ENCODE measurements at regions of chr4 and their contacts with region 1.

Region 1: GRCh38 chr4:14856076-14856933 is 146.0 kb upstream of the CPEB2 start:
- DNase-seq: peak; percentile 61
- H3K4me3 Mint-ChIP-seq: no peak overlapping the region
- H3K27ac Mint-ChIP-seq: peak overlapping the region; percentile 80
- H3K4me1 Mint-ChIP-seq: peaks cover 52% of the 10 kb centered on the region
- H3K27me3 Mint-ChIP-seq: no peaks in the 10 kb centered on the region

Region 2: DNA sequence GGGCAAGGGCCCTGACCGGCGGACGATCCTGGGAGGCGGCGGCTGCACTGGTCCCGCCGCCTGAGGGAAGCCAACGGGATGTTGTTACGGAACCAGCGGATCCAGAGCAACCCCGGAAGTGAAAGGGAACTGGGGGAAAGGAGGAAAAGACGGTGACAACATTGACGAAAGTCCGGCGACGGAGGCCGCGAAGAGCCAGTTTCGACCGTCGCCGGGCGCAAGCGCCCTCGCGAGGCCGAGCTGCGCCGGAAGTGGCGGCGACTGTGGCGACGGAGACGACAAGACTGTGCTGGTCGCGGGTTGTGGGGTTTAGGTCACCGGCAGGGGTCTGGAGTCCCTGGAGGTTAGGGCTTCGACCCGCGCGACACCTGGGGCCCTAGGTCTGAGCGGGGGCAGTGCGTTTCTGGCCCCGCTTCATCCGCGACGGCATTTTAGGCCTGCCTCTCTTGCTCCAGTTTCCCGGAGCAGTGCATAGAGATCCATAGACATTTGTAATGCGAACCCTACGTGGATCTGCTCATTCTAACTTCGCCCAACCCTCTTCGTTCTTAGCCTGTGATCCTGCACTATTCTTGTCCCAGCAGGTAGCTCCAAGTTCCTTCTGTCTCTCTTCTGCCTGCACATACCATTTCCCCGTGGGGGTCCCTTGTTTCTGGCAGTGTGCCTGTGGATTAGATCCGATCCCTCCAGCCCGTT is 1228.6 kb before region 1 on chr4 and contains the start of gene BOD1L1:
- intact Hi-C with region 1: loop called (anchors 2 kb)
- DNase-seq: peak; percentile 81
- H3K4me3 Mint-ChIP-seq: peak within 1 kb of the TSS; percentile 99
- H3K27ac Mint-ChIP-seq: peak within 1 kb of the TSS; percentile 98
- H3K4me1 Mint-ChIP-seq: peaks cover 29% of the 10 kb centered on the region
- H3K27me3 Mint-ChIP-seq: peaks cover 4% of the 10 kb centered on the region
- total RNA-seq, gene BOD1L1: 40.1 and 40.4 TPM in 2 replicates

Region 3: GRCh38 chr4:14787894-14788293 is 68.4 kb before region 1 on chr4:
- intact Hi-C with region 1: loop called (anchors 1 kb)
- DNase-seq: no peak
- H3K4me3 Mint-ChIP-seq: no peak overlapping the region
- H3K27ac Mint-ChIP-seq: no peak overlapping the region
- H3K4me1 Mint-ChIP-seq: peaks cover 49% of the 10 kb centered on the region
- H3K27me3 Mint-ChIP-seq: no peaks in the 10 kb centered on the region

Region 4: GRCh38 chr4:14831406-14831805 is 24.9 kb before region 1 on chr4:
- intact Hi-C with region 1: no loop called
- DNase-seq: no peak
- H3K4me3 Mint-ChIP-seq: no peak overlapping the region
- H3K27ac Mint-ChIP-seq: no peak overlapping the region
- H3K4me1 Mint-ChIP-seq: no peaks in the 10 kb centered on the region
- H3K27me3 Mint-ChIP-seq: no peaks in the 10 kb centered on the region

Region 5: GRCh38 chr4:14877246-14878225 is 21.2 kb after region 1 on chr4:
- intact Hi-C with region 1: loop called (anchors 1 kb)
- DNase-seq: no peak
- H3K4me3 Mint-ChIP-seq: peak overlapping the region; percentile 27
- H3K27ac Mint-ChIP-seq: peak overlapping the region; percentile 64
- H3K4me1 Mint-ChIP-seq: peaks cover 29% of the 10 kb centered on the region
- H3K27me3 Mint-ChIP-seq: no peaks in the 10 kb centered on the region

Region 6: DNA sequence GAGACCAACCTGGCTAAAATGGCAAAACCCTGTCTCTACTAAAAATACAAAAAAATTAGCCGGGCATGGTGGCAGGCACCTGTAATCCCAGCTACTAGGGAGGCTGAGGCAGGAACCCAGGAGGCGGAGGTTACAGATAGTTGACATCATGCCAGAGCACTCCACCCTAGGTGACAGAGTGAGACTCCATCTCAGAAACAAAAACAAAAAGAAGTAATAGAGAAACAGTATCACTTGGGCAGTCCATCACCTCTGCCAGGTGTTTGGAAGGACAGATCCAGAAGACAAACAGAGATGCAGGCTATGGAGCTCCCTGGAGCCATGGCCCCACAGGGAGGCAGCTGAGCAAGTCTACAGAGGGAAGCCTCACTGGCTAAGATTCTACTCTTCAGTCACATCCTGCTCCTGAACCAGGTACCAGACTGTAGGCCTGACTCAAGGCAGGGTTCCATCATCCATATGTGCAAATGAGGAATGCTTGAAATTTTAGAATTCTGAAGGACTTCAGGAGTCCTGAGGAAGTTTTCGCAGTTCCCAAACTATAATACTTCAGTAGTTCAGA is 64.5 kb after region 1 on chr4:
- intact Hi-C with region 1: loop called (anchors 2 kb)
- DNase-seq: no peak
- H3K4me3 Mint-ChIP-seq: no peak overlapping the region
- H3K27ac Mint-ChIP-seq: no peak overlapping the region
- H3K4me1 Mint-ChIP-seq: no peaks in the 10 kb centered on the region
- H3K27me3 Mint-ChIP-seq: no peaks in the 10 kb centered on the region

Region 7: GRCh38 chr4:15117270-15117946 is 261.1 kb after region 1 on chr4:
- intact Hi-C with region 1: loop called (anchors 1 kb)
- DNase-seq: no peak
- H3K4me3 Mint-ChIP-seq: no peak overlapping the region
- H3K27ac Mint-ChIP-seq: peak overlapping the region; percentile 61
- H3K4me1 Mint-ChIP-seq: peaks cover 12% of the 10 kb centered on the region
- H3K27me3 Mint-ChIP-seq: no peaks in the 10 kb centered on the region

Region 8: GRCh38 chr4:15182600-15183220 is 326.4 kb after region 1 on chr4:
- intact Hi-C with region 1: loop called (anchors 5 kb)
- DNase-seq: no peak
- H3K4me3 Mint-ChIP-seq: no peak overlapping the region
- H3K27ac Mint-ChIP-seq: peak overlapping the region; percentile 67
- H3K4me1 Mint-ChIP-seq: peaks cover 15% of the 10 kb centered on the region
- H3K27me3 Mint-ChIP-seq: peaks cover 5% of the 10 kb centered on the region